ENCODE measurements at regions of chr1 and their contacts with region 1.

Region 1: DNA sequence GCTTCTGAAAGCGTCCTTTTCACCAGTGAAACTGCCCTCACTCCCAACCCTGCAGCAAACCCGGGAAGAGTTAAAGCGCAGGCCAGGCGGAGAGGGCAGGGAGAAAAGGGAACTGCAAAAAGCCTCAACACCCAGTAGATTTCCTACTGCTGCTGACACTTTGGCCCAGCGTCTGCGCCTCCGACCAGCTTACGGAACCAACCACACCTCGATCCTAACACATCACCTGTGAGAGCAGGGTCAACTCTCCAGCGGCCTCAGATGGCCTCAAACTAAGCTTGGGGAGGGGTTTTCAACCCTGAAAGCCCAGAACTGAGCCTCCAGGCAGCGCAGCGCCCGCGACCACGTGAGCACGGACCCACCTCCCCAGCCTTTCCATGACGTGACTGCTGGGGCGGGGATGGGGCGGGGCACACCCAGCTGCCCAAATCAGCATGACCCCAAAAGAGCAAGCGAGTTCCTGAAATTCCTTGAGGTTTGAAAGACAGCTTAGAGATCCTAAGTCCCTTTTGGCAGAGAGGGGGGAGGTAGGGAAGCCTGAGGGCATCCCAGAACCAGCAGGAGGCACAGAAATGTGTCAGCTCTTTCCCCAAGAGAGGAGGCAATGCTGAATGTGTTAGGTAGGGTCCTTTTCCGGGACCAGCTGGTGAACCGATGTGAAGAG is 59.1 kb downstream of the ITPKB start:
- DNase-seq: peak; percentile 42 to 89 (median 75)
- ATAC-seq: peak; percentile 58
- H3K4me3 ChIP-seq: peak overlapping the region; percentile 40
- H3K4me3 Mint-ChIP-seq: peak overlapping the region; percentile 80 to 90 (median 82)
- H3K27ac ChIP-seq: peak overlapping the region; percentile 86
- H3K27ac Mint-ChIP-seq: peak overlapping the region; percentile 95 to 100 (median 99)
- H3K4me1 ChIP-seq: peaks cover 86 to 97% of the 10 kb centered on the region in 2 donors
- H3K4me1 Mint-ChIP-seq: peaks cover 83 to 100% (median 99%) of the 10 kb centered on the region in 7 donors
- H3K27me3 ChIP-seq: no peaks in the 10 kb centered on the region
- H3K27me3 Mint-ChIP-seq: peaks cover 0 to under 1% (median 0%) of the 10 kb centered on the region in 5 donors

Region 2: GRCh38 chr1:226626577-226626956 is 53.4 kb before region 1 on chr1:
- CTCF ChIA-PET with region 1: interaction called, 33 read pairs
- POLR2A ChIA-PET with region 1: no interaction called
- intact Hi-C with region 1: loop called in 1 of 2 experiments (anchors 1 kb)
- DNase-seq: peak; percentile 62 to 85 (median 76)
- ATAC-seq: peak; percentile 97
- H3K4me3 ChIP-seq: peak overlapping the region; percentile 25
- H3K4me3 Mint-ChIP-seq: peak overlapping the region; percentile 29 to 72 (median 56)
- H3K27ac ChIP-seq: no peak overlapping the region
- H3K27ac Mint-ChIP-seq: peak overlapping the region in 7 of 9 donors; percentile 43 to 85 (median 67)
- H3K4me1 ChIP-seq: peaks cover 8 to 10% of the 10 kb centered on the region in 2 donors
- H3K4me1 Mint-ChIP-seq: peaks cover 9 to 33% (median 27%) of the 10 kb centered on the region in 7 donors
- H3K27me3 ChIP-seq: no peaks in the 10 kb centered on the region
- H3K27me3 Mint-ChIP-seq: peaks cover 0 to 8% (median 0%) of the 10 kb centered on the region in 5 donors

Region 3: GRCh38 chr1:226649780-226650179 is 30.2 kb before region 1 on chr1:
- CTCF ChIA-PET with region 1: interaction called, 5 read pairs
- POLR2A ChIA-PET with region 1: interaction called, 276 read pairs
- intact Hi-C with region 1: loop called (anchors 1 to 2 kb)
- DNase-seq: peak in 6 of 9 donors; percentile 48 to 58 (median 54)
- ATAC-seq: no peak
- H3K4me3 ChIP-seq: no peak overlapping the region
- H3K4me3 Mint-ChIP-seq: peak overlapping the region in 5 of 10 donors; percentile 15 to 50 (median 17)
- H3K27ac ChIP-seq: no peak overlapping the region
- H3K27ac Mint-ChIP-seq: no peak overlapping the region
- H3K4me1 ChIP-seq: peaks cover 23 to 51% of the 10 kb centered on the region in 2 donors
- H3K4me1 Mint-ChIP-seq: peaks cover 0 to 83% (median 63%) of the 10 kb centered on the region in 7 donors
- H3K27me3 ChIP-seq: no peaks in the 10 kb centered on the region
- H3K27me3 Mint-ChIP-seq: no peaks in the 10 kb centered on the region

Region 4: GRCh38 chr1:226702957-226703831 is 23.2 kb after region 1 on chr1:
- CTCF ChIA-PET with region 1: interaction called, 5 read pairs
- POLR2A ChIA-PET with region 1: interaction called, 5 read pairs
- intact Hi-C with region 1: loop called (anchors 1 kb)
- DNase-seq: peak; percentile 79 to 93 (median 86)
- ATAC-seq: peak; percentile 92
- H3K4me3 ChIP-seq: peak overlapping the region; percentile 69
- H3K4me3 Mint-ChIP-seq: peak overlapping the region; percentile 81 to 92 (median 86)
- H3K27ac ChIP-seq: peak overlapping the region; percentile 93
- H3K27ac Mint-ChIP-seq: peak overlapping the region; percentile 89 to 99 (median 95)
- H3K4me1 ChIP-seq: peaks cover 42 to 85% of the 10 kb centered on the region in 2 donors
- H3K4me1 Mint-ChIP-seq: peaks cover 59 to 95% (median 81%) of the 10 kb centered on the region in 7 donors
- H3K27me3 ChIP-seq: no peaks in the 10 kb centered on the region
- H3K27me3 Mint-ChIP-seq: no peaks in the 10 kb centered on the region

Region 5: DNA sequence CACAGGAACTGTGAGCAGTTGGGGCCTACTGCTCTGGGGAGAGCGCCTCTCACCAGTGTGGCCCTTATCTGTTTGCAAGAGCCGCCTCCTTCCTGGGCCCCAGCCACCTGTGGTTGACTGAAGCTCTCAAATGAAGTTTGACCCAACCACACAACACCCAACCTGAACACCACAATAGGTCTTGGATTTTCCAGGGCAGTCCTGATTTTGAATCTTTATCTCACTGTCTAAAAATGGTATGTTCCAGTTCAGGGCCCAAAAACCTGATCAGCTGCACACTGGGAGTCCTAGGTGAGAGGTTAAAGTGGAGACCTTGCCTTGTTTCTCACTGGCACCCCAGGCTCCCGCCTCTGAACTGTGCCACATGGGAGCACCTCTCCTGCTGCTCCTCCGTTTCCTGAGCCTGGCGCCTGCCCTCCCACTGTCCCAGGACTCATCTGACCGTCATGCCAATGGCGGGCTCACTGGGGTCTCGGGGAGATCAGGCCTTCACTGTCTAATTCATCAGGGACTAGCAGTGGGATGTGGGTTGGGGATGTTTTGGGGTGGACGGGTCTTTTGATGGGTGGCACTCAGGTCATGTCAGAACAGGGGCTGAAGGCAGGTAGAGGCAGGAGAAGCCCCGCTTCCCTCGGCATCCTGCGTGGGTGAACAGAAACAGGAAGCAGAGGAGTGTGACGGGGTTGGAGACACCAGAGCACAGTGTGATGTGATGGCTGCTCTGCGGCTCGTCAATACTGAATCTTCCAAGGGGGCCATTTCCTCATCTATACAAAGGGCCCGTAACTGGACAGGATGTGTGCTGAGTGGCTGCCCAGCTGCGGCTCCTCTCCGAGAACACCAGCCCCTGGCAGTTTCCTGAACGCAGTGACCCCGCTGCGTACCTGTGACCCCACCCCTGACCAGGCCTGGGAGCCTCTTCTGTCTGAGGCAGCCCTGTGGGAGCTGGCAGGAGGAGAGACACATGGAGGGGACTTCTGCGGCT is 118.7 kb after region 1 on chr1:
- CTCF ChIA-PET with region 1: no interaction called
- POLR2A ChIA-PET with region 1: no interaction called
- intact Hi-C with region 1: loop called in 1 of 2 experiments (anchors 1 kb)
- DNase-seq: peak; percentile 24 to 75 (median 67)
- ATAC-seq: peak; percentile 85
- H3K4me3 ChIP-seq: peak overlapping the region; percentile 33
- H3K4me3 Mint-ChIP-seq: peak overlapping the region; percentile 66 to 86 (median 72)
- H3K27ac ChIP-seq: peak overlapping the region; percentile 67
- H3K27ac Mint-ChIP-seq: peak overlapping the region; percentile 96 to 100 (median 99)
- H3K4me1 ChIP-seq: peaks cover 31 to 33% of the 10 kb centered on the region in 2 donors
- H3K4me1 Mint-ChIP-seq: peaks cover 27 to 47% (median 40%) of the 10 kb centered on the region in 7 donors
- H3K27me3 ChIP-seq: no peaks in the 10 kb centered on the region
- H3K27me3 Mint-ChIP-seq: peaks cover 0 to 12% (median 0%) of the 10 kb centered on the region in 5 donors

Region 6: GRCh38 chr1:226940029-226940805 is 260.2 kb after region 1 on chr1 and contains the start of gene COQ8A:
- CTCF ChIA-PET with region 1: interaction called, 4 read pairs
- POLR2A ChIA-PET with region 1: interaction called, 5 read pairs
- intact Hi-C with region 1: loop called in 1 of 2 experiments (anchors 5 kb)
- DNase-seq: peak in 8 of 9 donors; percentile 99 to 100 (median 100)
- ATAC-seq: peak; percentile 95
- H3K4me3 ChIP-seq: peak within 1 kb of the TSS; percentile 84
- H3K4me3 Mint-ChIP-seq: peak within 1 kb of the TSS; percentile 85 to 94 (median 92)
- H3K27ac ChIP-seq: peak within 1 kb of the TSS; percentile 87
- H3K27ac Mint-ChIP-seq: peak within 1 kb of the TSS; percentile 94 to 98 (median 97)
- H3K4me1 ChIP-seq: peaks cover 15 to 34% of the 10 kb centered on the region in 2 donors
- H3K4me1 Mint-ChIP-seq: peaks cover 43 to 67% (median 50%) of the 10 kb centered on the region in 7 donors
- H3K27me3 ChIP-seq: no peaks in the 10 kb centered on the region
- H3K27me3 Mint-ChIP-seq: no peaks in the 10 kb centered on the region
- total RNA-seq, gene COQ8A: 34.1 to 83.4 (median 67.8) TPM

Measured in naive thymus-derived CD4-positive, alpha-beta T cell (primary cell).